Heart left ventricle (tissue), 16 donors: ENCODE measurements at regions of chr12 and their contacts with region 1.

Region 1: DNA sequence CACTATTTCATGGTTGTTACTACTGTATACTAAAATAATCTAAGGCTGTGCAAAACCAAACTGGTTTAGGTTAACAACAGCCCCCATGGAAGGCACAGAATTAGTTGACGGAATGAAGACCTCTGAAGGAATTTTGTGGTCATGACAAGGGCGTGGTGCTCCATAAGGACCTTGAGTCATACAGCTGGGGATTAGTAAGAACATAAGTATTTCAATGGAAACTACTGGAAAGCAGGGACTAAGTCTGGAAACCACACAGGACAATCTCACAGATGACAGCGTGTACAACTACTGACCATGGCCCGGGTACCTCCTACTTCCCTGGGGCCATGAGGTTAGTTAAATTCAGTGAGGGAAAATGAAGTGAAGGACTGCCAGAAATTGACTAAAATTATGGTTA is 98.5 kb upstream of the PLEKHA5 start:
- DNase-seq: no peak
- ATAC-seq: peak; percentile 16 to 61 (median 60)
- H3K4me3 ChIP-seq: no peak overlapping the region
- H3K27ac ChIP-seq: peak overlapping the region in 2 of 12 donors; percentile 11 to 25
- H3K4me1 ChIP-seq: peaks cover 0 to 21% (median 5%) of the 10 kb centered on the region in 12 donors
- H3K27me3 ChIP-seq: no peaks in the 10 kb centered on the region
- CTCF ChIP-seq: no peak
- POLR2A ChIP-seq: no peak

Region 2: GRCh38 chr12:18752280-18752920 is 278.6 kb before region 1 on chr12:
- intact Hi-C with region 1: loop called in 2 of 10 experiments (anchors 5 to 10 kb)
- DNase-seq: peak in 4 of 5 donors; percentile 44 to 68 (median 51)
- ATAC-seq: peak in 3 of 4 donors; percentile 34 to 69 (median 43)
- H3K4me3 ChIP-seq: no peak overlapping the region
- H3K27ac ChIP-seq: peak overlapping the region; percentile 37 to 95 (median 78)
- H3K4me1 ChIP-seq: peaks cover 3 to 57% (median 21%) of the 10 kb centered on the region in 12 donors
- H3K27me3 ChIP-seq: no peaks in the 10 kb centered on the region
- CTCF ChIP-seq: no peak
- POLR2A ChIP-seq: no peak

Region 3: GRCh38 chr12:18861287-18861858 is 169.7 kb before region 1 on chr12:
- intact Hi-C with region 1: loop called in 1 of 10 experiments (anchors 10 kb)
- DNase-seq: no peak
- ATAC-seq: no peak
- H3K4me3 ChIP-seq: no peak overlapping the region
- H3K27ac ChIP-seq: no peak overlapping the region
- H3K4me1 ChIP-seq: peaks cover 0 to 7% (median 0%) of the 10 kb centered on the region in 12 donors
- H3K27me3 ChIP-seq: no peaks in the 10 kb centered on the region
- CTCF ChIP-seq: peak; percentile 29 to 57 (median 48)
- POLR2A ChIP-seq: no peak